Ovary (tissue), 10 donors: ENCODE measurements at regions of chr9 and their contacts with region 1.

Region 1: DNA sequence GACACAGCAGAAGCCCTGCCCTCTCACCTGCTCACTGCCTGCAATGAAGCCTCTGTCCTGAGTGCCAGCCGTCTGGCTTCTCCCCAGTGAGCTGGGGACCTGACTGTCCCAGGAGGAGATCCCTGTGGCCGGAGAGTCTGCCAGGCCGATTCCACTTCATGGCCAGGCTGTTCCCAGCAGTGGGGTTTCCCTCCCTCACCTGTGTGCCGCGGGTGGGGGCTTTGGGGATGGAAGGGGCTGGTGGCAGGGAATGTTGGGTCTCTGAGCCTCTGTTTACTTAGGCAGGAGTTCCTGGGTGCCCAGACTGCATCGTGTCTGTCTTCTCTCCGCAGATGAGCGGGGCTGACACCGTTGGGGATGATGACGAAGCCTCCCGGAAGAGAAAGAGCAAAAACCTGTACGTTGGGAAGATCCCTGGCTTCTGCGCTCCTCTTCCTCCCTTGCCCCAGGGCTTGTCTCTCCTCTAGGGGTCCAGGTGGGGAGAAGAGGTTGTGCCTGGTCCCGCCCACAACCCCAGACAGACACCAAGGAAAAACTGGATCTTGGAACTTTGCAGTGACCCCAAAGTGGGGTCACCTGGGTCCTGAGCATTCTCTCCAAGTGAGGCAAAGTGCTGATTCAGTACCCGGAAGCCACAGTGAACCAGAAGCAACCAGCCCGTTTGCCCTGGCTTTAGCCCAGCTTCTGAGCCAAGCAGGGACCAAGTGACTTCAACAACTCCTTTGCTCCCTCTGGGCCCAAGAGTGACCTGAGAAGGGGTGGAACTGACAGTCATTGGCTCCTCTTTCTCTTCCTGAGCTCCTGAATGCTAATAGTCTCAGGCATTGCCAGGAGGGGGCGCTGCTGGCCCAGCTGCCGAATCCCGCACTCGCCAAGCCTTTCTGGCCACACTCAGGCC is 127.7 kb downstream of the RGS3 start:
- DNase-seq: peak; percentile 81 to 93 (median 90)
- H3K4me3 ChIP-seq: no peak overlapping the region
- H3K27ac ChIP-seq: peak overlapping the region in 1 of 2 donors; percentile 19
- H3K4me1 ChIP-seq: peaks cover 8% of the 10 kb centered on the region
- H3K27me3 ChIP-seq: no peaks in the 10 kb centered on the region
- CTCF ChIP-seq: peak; percentile 83 to 93 (median 92)
- EP300 ChIP-seq: no peak
- POLR2A ChIP-seq: no peak

Region 2: GRCh38 chr9:113446323-113446740 is 144.9 kb before region 1 on chr9:
- intact Hi-C with region 1: loop called (anchors 2 to 5 kb)
- DNase-seq: no peak
- H3K4me3 ChIP-seq: no peak overlapping the region
- H3K27ac ChIP-seq: no peak overlapping the region
- H3K4me1 ChIP-seq: no peaks in the 10 kb centered on the region
- H3K27me3 ChIP-seq: no peaks in the 10 kb centered on the region
- CTCF ChIP-seq: peak; percentile 47 to 78 (median 63)
- EP300 ChIP-seq: no peak
- POLR2A ChIP-seq: no peak

Region 3: DNA sequence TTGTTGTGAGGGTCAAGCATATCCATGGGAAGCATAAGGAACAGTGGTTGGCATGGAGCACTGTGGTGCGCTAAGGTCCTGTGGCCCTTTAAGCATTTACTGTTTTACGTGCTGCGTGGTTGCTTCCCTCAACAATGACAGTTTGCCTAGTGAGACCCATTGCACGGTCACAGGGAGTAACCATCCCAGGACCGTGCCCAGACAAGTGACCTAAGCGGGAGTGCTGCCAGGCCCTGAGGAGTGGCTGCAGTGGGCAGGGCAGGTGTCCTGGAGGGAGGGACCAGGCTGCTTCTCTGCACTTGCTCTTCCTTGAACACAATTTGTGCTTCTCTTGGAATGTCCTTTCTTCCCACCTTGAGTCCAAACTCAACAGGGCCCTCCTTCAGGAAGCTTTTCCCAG is 63.2 kb before region 1 on chr9:
- intact Hi-C with region 1: loop called in 1 of 4 experiments (anchors 2 kb)
- DNase-seq: peak in 1 of 5 donors; percentile 26
- H3K4me3 ChIP-seq: no peak overlapping the region
- H3K27ac ChIP-seq: no peak overlapping the region
- H3K4me1 ChIP-seq: peaks cover 13% of the 10 kb centered on the region
- H3K27me3 ChIP-seq: no peaks in the 10 kb centered on the region
- CTCF ChIP-seq: no peak
- EP300 ChIP-seq: no peak
- POLR2A ChIP-seq: no peak

Region 4: DNA sequence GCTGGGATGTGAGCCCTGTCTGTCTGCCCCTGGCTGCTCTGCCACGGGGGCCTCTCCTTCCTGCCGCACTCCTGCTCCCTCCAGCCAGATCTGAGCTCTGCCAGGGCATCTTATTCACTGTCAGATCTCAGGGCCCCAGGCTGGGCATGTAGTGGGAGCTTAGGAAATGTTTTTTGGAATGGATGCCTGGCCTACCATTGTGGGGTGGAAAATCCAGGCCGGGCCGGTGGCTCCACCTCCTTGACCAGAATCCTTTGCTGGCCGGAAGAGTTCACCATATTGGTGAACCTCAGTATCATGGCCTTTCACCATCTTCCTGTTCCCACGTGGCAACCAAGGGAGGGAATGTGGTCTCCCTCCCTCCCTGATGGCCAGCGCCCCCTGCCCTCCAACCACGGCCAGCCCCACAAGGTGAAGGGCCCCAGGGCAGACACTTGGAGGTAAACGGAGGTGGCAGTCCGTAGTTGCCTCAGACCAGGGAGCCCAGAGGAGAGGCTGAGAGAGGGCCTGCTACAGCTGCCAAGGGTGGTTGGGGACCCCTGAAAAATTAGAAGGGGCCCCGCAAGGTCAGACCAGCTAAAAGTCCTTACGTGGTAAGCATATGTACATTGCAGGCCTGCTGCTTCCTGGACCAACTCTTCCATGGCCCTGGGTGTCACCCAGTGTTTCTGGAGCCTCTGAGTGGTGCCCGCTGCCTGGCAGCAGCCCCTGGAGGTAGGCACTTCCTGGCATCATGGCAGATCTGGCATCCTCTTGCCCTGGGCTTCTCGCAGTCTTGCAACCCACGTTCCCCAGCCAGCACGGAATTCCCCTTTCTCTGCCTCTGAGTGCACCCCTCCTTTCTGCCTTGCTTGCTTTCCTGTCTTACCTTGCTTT is 25.6 kb after region 1 on chr9:
- intact Hi-C with region 1: loop called in 1 of 4 experiments (anchors 2 kb)
- DNase-seq: peak in 2 of 5 donors; percentile 22 to 36
- H3K4me3 ChIP-seq: no peak overlapping the region
- H3K27ac ChIP-seq: peak overlapping the region in 1 of 2 donors; percentile 68
- H3K4me1 ChIP-seq: peaks cover 25% of the 10 kb centered on the region
- H3K27me3 ChIP-seq: no peaks in the 10 kb centered on the region
- CTCF ChIP-seq: no peak
- EP300 ChIP-seq: no peak
- POLR2A ChIP-seq: no peak

Region 5: DNA sequence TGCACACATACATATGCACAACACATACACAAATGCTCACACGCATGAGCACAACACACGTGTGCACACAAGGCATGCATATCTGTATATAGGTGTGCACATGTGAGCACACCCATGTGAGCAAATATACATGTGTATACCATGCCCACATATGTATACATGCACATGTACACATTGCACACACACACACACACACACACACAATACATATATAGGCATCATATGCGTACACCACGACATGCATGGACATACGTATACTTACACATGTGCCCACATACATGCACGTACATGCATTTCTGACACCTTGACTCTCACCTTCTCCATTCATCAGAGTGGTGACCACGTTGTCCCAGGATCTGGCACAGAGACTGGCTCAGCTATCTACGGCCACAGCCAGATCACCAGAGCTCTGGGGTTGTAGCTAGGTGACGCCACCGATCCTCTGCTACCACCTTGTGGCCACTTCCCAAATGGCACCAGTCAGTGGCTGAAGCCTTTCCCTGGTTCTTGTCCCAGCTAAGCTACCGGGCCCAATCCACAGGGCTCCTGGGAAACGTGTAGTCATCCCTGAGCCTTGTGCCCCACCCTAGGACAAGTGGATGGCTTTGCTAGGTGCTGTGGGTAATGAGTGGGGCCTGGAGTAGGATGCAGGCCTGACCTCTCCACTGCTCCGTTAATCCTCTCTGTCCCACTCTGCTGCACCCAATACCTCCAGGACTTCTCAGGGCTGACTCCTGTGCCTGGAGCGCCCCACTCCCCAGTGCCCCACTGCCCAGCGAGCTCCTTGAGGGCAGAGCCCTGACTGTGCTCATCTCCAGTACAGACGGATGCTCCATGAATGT is 66.7 kb after region 1 on chr9:
- intact Hi-C with region 1: loop called (anchors 1 kb)
- DNase-seq: peak; percentile 75 to 89 (median 88)
- H3K4me3 ChIP-seq: no peak overlapping the region
- H3K27ac ChIP-seq: no peak overlapping the region
- H3K4me1 ChIP-seq: peaks cover 7% of the 10 kb centered on the region
- H3K27me3 ChIP-seq: no peaks in the 10 kb centered on the region
- CTCF ChIP-seq: peak; percentile 69 to 94 (median 92)
- EP300 ChIP-seq: no peak
- POLR2A ChIP-seq: no peak

Region 6: GRCh38 chr9:113756476-113757192 is 165.4 kb after region 1 on chr9:
- intact Hi-C with region 1: no loop called
- DNase-seq: no peak
- H3K4me3 ChIP-seq: no peak overlapping the region
- H3K27ac ChIP-seq: no peak overlapping the region
- H3K4me1 ChIP-seq: peaks cover 3% of the 10 kb centered on the region
- H3K27me3 ChIP-seq: no peaks in the 10 kb centered on the region
- CTCF ChIP-seq: no peak
- EP300 ChIP-seq: no peak
- POLR2A ChIP-seq: no peak